Activated B cell treated with CpG ODN at 0.5 μM for 24 hours (primary cell): ENCODE measurements at regions of chr16 and their contacts with region 1.

Region 1: DNA sequence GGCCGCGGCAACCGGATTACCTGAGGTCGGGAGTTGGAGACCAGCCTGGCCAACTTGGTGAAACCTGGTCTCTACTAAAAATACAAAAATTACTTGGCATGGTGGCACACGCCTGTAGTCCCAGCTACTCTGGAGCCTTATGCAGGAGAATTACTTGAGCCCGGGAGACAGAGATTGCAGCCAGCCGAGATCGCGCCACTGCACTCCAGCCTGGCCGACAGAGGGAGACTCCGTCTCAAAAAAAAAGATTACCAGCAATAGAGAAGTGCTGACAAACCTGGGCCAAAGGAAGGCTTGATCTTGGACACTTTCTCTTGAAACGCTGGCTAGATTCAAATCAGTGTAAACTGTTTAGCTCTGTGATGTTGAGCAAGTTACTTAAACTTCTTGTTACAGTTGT is 4.3 kb downstream of the MT1H start:
- DNase-seq: no peak
- ATAC-seq: peak; percentile 61
- H3K4me3 Mint-ChIP-seq: no peak overlapping the region
- H3K27ac Mint-ChIP-seq: no peak overlapping the region
- H3K4me1 Mint-ChIP-seq: peaks cover 11% of the 10 kb centered on the region
- H3K27me3 Mint-ChIP-seq: peaks cover 58% of the 10 kb centered on the region
- CTCF ChIP-seq: no peak

Region 2: GRCh38 chr16:56632156-56632847 is 41.6 kb before region 1 on chr16 and contains the start of gene MT1M:
- CTCF ChIA-PET with region 1: no interaction called
- POLR2A ChIA-PET with region 1: no interaction called
- intact Hi-C with region 1: loop called (anchors 5 kb)
- DNase-seq: no peak
- ATAC-seq: no peak
- H3K4me3 Mint-ChIP-seq: peak within 1 kb of the TSS; percentile 65
- H3K27ac Mint-ChIP-seq: no peak within 1 kb of the TSS
- H3K4me1 Mint-ChIP-seq: peaks cover 43% of the 10 kb centered on the region
- H3K27me3 Mint-ChIP-seq: peaks cover 39% of the 10 kb centered on the region
- CTCF ChIP-seq: no peak
- total RNA-seq, gene MT1M: not detected in 2 replicates

Region 3: DNA sequence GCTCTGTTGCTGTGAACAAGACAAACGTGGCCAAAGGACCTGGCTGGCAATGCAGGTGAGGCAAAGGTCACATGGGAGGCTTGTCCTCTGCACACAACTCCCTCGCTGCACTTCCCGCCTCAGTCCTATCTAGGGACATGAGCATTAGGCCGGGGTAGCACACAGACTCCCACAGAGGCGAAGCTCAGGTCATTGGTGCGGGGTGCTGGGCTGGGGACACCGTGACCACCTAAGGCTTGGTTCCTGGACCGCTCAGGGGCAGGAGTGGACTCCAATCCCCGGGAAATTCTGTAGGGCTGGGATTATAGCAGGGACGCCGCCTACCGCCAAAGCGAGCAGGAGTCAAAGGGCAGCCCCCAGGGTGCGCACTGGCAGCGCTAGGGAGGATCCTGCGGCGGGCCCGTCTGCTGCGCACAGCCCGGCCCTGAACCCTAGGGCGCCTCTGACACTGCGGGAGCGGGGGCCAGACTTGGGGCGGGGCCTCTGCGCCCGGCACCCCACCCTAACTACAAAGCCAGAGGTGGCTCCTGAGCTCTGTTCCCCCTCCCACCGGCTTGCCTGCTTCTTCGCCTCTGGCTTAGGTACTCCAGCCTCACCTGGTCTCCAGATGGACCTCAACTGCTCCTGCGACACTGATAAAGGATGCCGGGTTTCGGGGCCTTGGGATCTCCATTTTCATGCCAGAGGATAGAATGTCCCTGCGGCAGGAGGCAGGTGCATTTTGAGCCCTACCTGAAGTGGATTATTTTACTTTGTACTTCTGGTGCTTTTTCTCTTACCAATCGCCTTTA is 26.1 kb before region 1 on chr16:
- CTCF ChIA-PET with region 1: no interaction called
- POLR2A ChIA-PET with region 1: no interaction called
- intact Hi-C with region 1: no loop called
- DNase-seq: no peak
- ATAC-seq: no peak
- H3K4me3 Mint-ChIP-seq: no peak overlapping the region
- H3K27ac Mint-ChIP-seq: no peak overlapping the region
- H3K4me1 Mint-ChIP-seq: peaks cover 12% of the 10 kb centered on the region
- H3K27me3 Mint-ChIP-seq: peaks cover 39% of the 10 kb centered on the region
- CTCF ChIP-seq: no peak

Region 4: GRCh38 chr16:56689171-56689570 is 15.2 kb after region 1 on chr16:
- CTCF ChIA-PET with region 1: no interaction called
- POLR2A ChIA-PET with region 1: no interaction called
- intact Hi-C with region 1: no loop called
- DNase-seq: no peak
- ATAC-seq: no peak
- H3K4me3 Mint-ChIP-seq: no peak overlapping the region
- H3K27ac Mint-ChIP-seq: no peak overlapping the region
- H3K4me1 Mint-ChIP-seq: no peaks in the 10 kb centered on the region
- H3K27me3 Mint-ChIP-seq: peaks cover 12% of the 10 kb centered on the region
- CTCF ChIP-seq: no peak